ENCODE measurements at regions of chr4 and their contacts with region 1.

Region 1: GRCh38 chr4:163554870-163555465 is 60.5 kb downstream of the TMA16 start:
- DNase-seq: peak; percentile 54
- H3K4me3 ChIP-seq: no peak overlapping the region
- H3K27ac ChIP-seq: no peak overlapping the region
- H3K4me1 ChIP-seq: no peaks in the 10 kb centered on the region
- H3K27me3 ChIP-seq: no peaks in the 10 kb centered on the region

Region 2: GRCh38 chr4:162921178-162921785 is 633.7 kb before region 1 on chr4:
- in situ Hi-C with region 1: no loop called
- DNase-seq: no peak
- H3K4me3 ChIP-seq: no peak overlapping the region
- H3K27ac ChIP-seq: no peak overlapping the region
- H3K4me1 ChIP-seq: no peaks in the 10 kb centered on the region
- H3K27me3 ChIP-seq: no peaks in the 10 kb centered on the region

Region 3: GRCh38 chr4:164725066-164725465 is 1170.1 kb after region 1 on chr4:
- in situ Hi-C with region 1: loop called (anchors 10 kb)
- DNase-seq: no peak
- H3K4me3 ChIP-seq: no peak overlapping the region
- H3K27ac ChIP-seq: no peak overlapping the region
- H3K4me1 ChIP-seq: no peaks in the 10 kb centered on the region
- H3K27me3 ChIP-seq: no peaks in the 10 kb centered on the region

Measured in GM23248 (cell line).